Activated naive CD4-positive, alpha-beta T cell treated with anti-CD3 and anti-CD28 coated beads, Interleukin-2, amount 10 ng/mL, durations not matched to agents 7 days and 5 days (primary cell): ENCODE measurements at regions of chr9 and their contacts with region 1.

Region 1: DNA sequence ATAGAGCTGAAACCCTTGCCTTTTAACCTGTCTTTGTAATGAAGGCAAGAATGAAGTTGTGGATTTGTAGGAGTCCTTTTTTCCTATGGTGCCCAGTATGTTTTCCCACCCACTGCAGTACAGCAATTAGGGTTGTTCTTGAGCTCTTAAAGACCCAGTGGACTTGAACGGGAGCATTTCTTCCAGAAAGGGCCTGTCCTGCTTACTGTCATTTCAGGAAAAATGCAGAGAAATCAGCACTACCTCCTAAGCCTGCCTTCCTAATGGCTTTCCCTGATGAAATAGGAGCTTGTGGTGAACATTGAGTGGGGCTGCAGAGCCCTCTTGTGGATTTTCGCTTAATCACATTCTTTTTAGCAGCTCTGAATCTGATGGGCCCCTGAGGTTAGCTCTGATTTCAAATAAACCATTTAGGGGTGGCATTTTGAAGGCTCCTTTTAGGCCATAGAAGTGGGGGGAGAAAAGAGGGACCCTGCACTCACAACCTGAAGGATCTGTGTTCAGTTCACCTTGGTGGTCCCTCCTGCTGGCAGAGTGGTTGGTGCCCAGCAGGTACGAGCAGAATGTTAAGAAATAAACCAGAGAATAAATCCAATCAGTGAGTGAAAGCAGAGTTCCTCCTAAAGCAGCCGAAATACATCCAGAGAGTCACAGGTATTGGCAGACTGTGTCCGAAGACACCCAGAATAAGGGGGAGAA is 188.0 kb upstream of the KLF9 start:
- DNase-seq: peak; percentile 60
- H3K4me3 Mint-ChIP-seq: no peak overlapping the region
- H3K27ac Mint-ChIP-seq: no peak overlapping the region
- H3K4me1 Mint-ChIP-seq: peaks cover 7% of the 10 kb centered on the region
- H3K27me3 Mint-ChIP-seq: no peaks in the 10 kb centered on the region

Region 2: DNA sequence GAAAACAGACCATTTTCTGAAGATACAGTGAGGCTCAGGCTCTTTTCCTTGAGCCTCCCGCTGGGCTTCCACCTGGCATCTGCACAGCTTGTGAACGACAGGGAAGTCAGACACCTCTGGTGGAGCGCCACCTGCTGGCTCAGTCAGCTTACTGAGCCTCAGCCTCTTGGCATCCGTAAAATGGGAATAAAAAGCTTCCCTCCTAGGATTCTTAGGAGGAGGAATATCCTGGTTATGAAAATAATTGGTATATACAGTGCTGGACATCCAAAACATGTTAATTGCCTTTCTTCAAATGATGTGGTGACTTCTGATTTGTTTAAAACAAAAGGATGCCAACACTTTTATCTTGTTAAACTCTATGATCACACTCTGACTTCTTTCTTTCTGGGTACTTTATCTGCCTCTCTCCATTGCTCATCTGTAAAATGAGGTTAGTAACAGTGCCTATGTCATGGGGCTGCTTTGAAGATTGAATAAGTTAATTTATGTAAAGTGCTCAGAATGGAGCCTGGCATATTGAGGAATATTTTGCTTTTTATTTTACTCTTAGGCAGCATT is 491.3 kb before region 1 on chr9:
- CTCF ChIA-PET with region 1: interaction called, 18 read pairs
- DNase-seq: peak; percentile 66
- H3K4me3 Mint-ChIP-seq: no peak overlapping the region
- H3K27ac Mint-ChIP-seq: no peak overlapping the region
- H3K4me1 Mint-ChIP-seq: no peaks in the 10 kb centered on the region
- H3K27me3 Mint-ChIP-seq: peaks cover 29% of the 10 kb centered on the region

Region 3: DNA sequence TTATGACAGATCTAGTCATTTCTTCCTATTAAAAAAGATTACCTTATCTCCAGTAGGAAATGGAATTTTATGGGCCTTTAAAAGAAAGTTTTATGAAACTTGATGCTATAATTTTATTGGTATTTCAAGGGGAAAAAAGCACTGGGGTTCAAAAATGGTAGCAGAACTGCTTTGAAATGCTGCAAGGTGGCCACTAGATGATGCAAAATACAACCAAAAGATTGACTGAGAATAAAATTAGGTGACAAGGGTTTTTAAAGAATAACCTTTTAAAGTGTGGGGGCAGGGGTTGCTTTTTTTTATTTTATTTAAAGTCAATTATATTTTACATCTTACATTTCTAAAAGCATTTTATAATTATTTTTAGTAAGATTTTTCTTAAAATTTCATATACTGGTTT is 249.7 kb before region 1 on chr9:
- CTCF ChIA-PET with region 1: interaction called, 12 read pairs
- DNase-seq: no peak
- H3K4me3 Mint-ChIP-seq: no peak overlapping the region
- H3K27ac Mint-ChIP-seq: no peak overlapping the region
- H3K4me1 Mint-ChIP-seq: no peaks in the 10 kb centered on the region
- H3K27me3 Mint-ChIP-seq: no peaks in the 10 kb centered on the region

Region 4: DNA sequence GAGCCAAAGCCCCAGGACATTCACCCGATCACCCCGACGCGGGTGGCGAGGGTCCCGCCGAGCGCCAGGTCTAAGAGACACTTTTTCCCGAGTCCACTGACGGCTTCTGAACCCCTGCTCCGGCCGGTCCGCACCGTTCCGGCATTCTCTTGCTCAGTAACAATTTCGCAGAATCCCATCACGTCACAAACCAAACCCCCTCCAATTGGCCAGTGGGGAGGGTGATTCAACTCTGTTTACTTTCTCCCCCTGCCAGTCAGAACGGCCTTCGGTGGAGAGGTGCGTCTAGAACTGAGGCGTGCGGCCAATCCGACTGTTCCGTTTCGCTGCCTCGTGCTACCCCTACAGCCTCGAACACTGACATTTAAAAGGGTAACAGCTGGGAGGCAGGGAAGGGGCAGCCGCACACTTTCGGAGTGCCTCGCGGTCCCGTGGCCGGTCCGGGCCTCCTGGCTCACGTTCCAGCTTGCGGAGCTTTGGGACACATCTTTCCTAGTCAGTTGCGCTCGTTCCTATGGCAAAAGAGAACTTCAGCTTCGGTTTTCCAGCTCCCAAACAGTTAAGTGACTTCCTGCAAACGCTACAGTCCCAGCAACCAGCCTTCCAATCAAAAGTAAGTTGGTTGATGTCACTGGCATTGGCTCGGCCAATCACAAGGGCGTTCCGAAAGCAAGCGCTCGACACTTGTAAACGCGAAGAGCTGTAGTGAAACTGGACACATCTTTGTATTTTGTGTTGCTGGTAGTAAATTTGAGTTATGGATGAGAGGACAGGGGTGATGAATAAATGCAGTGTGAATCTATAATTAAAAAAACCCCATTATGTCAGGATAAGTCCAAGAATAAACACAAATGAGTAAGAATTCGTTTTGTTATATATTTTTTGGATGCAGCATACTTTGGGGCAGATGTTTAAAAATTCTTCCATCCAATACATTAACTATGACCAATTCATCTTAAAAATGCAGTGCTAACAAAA is 188.4 kb before region 1 on chr9 and contains the start of gene KLF9:
- CTCF ChIA-PET with region 1: interaction called, 18 read pairs
- DNase-seq: peak; percentile 97
- H3K4me3 Mint-ChIP-seq: peak within 1 kb of the TSS; percentile 94
- H3K27ac Mint-ChIP-seq: peak within 1 kb of the TSS; percentile 100
- H3K4me1 Mint-ChIP-seq: peaks cover 51% of the 10 kb centered on the region
- H3K27me3 Mint-ChIP-seq: peaks cover 5% of the 10 kb centered on the region

Region 5: GRCh38 chr9:70566751-70567150 is 35.7 kb before region 1 on chr9:
- CTCF ChIA-PET with region 1: interaction called, 11 read pairs
- DNase-seq: no peak
- H3K4me3 Mint-ChIP-seq: no peak overlapping the region
- H3K27ac Mint-ChIP-seq: no peak overlapping the region
- H3K4me1 Mint-ChIP-seq: peaks cover 46% of the 10 kb centered on the region
- H3K27me3 Mint-ChIP-seq: no peaks in the 10 kb centered on the region

Region 6: GRCh38 chr9:70668751-70669150 is 66.3 kb after region 1 on chr9:
- CTCF ChIA-PET with region 1: no interaction called
- DNase-seq: no peak
- H3K4me3 Mint-ChIP-seq: no peak overlapping the region
- H3K27ac Mint-ChIP-seq: no peak overlapping the region
- H3K4me1 Mint-ChIP-seq: peaks cover 18% of the 10 kb centered on the region
- H3K27me3 Mint-ChIP-seq: peaks cover 5% of the 10 kb centered on the region